BJ (cell line): ENCODE measurements at regions of chr17 and their contacts with region 1.

Region 1: DNA sequence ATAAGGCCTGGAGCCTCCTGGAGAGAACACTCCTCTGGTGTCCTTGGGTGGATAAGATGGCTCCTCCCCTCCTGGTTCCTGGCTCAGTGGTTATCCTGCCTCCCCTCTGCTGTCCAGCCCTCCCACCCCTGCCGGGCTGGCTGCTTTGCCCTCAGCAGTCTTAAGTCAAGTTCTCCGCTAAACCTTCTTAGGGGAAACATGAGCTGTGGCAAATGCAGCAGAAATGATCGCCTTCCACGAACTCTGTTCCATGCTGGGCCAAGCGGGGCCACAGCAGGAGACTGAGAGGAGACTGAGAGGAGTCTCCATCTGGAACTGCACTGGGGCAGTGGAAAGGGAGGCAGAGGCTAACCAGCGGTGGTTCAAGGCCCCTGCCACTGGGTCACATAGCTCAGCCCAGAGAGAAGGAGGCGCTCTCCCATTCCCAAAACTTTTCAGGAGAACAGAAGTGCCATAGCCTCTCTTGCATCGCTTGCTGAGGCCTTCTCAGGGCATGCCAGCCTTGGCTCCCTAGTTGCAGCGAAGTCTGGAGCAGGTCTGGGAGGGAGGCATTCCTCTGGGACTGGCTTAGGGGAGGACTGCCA is 26.9 kb downstream of the TNS4 start:
- DNase-seq: no peak
- H3K4me3 ChIP-seq: no peak overlapping the region
- H3K27me3 ChIP-seq: no peaks in the 10 kb centered on the region
- CTCF ChIP-seq: no peak

Region 2: GRCh38 chr17:40340880-40341807 is 133.4 kb before region 1 on chr17:
- CTCF ChIA-PET with region 1: no interaction called
- POLR2A ChIA-PET with region 1: no interaction called
- DNase-seq: no peak
- H3K4me3 ChIP-seq: peak overlapping the region; percentile 84
- H3K27me3 ChIP-seq: no peaks in the 10 kb centered on the region
- CTCF ChIP-seq: peak; percentile 31

Region 3: DNA sequence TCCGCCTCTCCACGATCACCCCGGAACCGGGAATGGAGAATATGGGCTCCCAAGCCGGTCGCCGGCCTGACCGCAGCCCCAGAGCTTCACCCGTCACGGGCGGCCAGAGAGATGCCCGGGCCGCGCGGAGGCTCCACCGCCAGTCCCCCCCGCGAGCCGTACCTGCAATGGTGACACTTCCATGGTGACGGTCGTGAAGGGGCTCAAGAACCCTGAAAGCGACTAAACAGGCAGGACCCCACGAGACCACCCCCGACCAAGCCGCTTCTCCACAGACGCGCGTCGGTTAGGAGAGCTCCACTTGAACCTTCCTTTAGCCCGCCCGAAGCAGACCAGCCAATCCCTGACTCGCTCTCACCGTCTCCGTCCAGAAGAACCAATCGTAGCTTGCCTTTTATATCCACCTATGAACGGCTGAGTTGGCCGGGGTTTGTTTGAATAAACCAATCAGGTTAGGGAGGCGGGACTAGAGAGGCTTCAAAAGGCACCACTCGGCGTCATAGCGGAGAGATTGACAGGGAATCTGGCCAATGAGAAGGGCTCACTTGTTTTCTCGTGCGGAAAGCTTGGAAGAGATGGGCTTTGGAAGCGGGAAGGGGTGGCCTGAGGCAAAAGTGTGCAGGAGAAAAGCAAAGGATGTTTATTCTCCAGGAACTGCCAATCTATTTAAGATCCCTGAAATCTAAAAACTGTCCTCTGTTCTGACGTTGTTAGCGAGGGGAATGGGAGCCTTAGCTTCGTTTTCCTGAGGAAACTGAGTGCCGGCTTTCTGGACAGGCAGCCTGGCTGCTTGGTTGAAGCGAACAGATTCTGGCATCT is 56.7 kb before region 1 on chr17 and contains the start of gene TOP2A:
- CTCF ChIA-PET with region 1: interaction called, 25 read pairs
- POLR2A ChIA-PET with region 1: no interaction called
- DNase-seq: peak; percentile 99
- H3K4me3 ChIP-seq: peak within 1 kb of the TSS; percentile 56
- H3K27me3 ChIP-seq: no peaks in the 10 kb centered on the region
- CTCF ChIP-seq: no peak
- polyA plus RNA-seq, gene TOP2A: 31.8 and 69.6 TPM in 2 replicates

Region 4: DNA sequence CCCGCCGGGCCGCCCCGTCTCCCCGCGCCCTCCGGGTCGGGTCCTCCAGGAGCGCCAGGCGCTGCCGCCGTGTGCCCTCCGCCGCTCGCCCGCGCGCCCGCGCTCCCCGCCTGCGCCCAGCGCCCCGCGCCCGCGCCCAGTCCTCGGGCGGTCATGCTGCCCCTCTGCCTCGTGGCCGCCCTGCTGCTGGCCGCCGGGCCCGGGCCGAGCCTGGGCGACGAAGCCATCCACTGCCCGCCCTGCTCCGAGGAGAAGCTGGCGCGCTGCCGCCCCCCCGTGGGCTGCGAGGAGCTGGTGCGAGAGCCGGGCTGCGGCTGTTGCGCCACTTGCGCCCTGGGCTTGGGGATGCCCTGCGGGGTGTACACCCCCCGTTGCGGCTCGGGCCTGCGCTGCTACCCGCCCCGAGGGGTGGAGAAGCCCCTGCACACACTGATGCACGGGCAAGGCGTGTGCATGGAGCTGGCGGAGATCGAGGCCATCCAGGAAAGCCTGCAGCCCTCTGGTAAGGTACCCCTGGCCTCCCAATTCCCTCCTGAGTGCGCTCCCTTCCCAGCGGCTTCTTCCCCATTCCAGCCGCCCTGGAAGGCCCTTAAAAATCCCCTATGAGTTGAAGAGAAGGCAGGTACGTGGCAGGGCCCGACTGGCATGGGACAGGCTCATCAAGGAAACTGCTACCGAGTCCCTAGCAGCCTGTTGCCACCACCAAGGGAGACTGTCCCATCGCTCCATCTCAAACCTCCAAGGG is 30.8 kb before region 1 on chr17:
- CTCF ChIA-PET with region 1: interaction called, 47 read pairs
- POLR2A ChIA-PET with region 1: interaction called, 7 read pairs
- DNase-seq: no peak
- H3K4me3 ChIP-seq: peak overlapping the region; percentile 95
- H3K27me3 ChIP-seq: no peaks in the 10 kb centered on the region
- CTCF ChIP-seq: peak; percentile 35

Region 5: GRCh38 chr17:40457964-40458791 is 16.3 kb before region 1 on chr17:
- CTCF ChIA-PET with region 1: interaction called, 31 read pairs
- POLR2A ChIA-PET with region 1: no interaction called
- DNase-seq: peak; percentile 79
- H3K4me3 ChIP-seq: no peak overlapping the region
- H3K27me3 ChIP-seq: no peaks in the 10 kb centered on the region
- CTCF ChIP-seq: no peak

Region 6: DNA sequence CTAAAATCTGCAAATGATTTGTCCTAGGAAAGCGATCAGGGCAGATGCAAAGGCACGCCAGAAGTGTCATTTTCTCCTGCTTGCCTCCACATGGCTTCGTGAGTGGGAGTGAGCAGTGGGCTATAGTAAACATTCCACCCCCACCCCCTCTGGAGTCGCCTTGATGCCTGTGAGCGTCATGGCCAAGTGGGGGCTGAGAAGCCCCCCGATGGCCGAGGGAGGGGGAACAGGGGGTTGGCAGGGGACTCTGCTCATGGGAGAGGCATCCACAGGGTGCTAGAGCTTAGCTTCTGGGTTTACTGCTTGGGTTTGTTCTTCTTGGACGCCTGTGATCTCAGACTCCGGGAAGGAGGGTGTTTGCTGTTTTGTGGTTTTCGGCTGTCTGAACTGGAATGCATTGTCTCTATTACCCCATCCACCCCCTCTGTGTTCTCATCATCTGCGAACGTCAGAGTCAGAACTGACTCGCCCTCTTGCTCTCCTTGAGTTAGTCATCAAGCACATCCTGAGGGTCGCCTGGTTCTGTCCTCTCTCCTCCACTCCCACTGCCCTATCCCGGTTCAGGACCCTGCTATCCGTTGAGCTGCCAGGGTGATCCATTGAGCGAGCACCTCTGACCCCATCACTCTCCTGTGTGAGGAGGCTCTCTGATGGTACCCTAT is 11.5 kb after region 1 on chr17:
- CTCF ChIA-PET with region 1: interaction called, 16 read pairs
- POLR2A ChIA-PET with region 1: interaction called, 8 read pairs
- DNase-seq: peak; percentile 99
- H3K4me3 ChIP-seq: peak overlapping the region; percentile 10; the same call in 1 of the 2 replicates
- H3K27me3 ChIP-seq: no peaks in the 10 kb centered on the region
- CTCF ChIP-seq: no peak

Region 7: GRCh38 chr17:40531051-40531991 is 56.8 kb after region 1 on chr17:
- CTCF ChIA-PET with region 1: interaction called, 98 read pairs
- POLR2A ChIA-PET with region 1: interaction called, 4 read pairs
- DNase-seq: no peak
- H3K4me3 ChIP-seq: no peak overlapping the region
- H3K27me3 ChIP-seq: no peaks in the 10 kb centered on the region
- CTCF ChIP-seq: no peak